MCF 10A (cell line): ENCODE measurements at regions of chr15 and their contacts with region 1.

Region 1: DNA sequence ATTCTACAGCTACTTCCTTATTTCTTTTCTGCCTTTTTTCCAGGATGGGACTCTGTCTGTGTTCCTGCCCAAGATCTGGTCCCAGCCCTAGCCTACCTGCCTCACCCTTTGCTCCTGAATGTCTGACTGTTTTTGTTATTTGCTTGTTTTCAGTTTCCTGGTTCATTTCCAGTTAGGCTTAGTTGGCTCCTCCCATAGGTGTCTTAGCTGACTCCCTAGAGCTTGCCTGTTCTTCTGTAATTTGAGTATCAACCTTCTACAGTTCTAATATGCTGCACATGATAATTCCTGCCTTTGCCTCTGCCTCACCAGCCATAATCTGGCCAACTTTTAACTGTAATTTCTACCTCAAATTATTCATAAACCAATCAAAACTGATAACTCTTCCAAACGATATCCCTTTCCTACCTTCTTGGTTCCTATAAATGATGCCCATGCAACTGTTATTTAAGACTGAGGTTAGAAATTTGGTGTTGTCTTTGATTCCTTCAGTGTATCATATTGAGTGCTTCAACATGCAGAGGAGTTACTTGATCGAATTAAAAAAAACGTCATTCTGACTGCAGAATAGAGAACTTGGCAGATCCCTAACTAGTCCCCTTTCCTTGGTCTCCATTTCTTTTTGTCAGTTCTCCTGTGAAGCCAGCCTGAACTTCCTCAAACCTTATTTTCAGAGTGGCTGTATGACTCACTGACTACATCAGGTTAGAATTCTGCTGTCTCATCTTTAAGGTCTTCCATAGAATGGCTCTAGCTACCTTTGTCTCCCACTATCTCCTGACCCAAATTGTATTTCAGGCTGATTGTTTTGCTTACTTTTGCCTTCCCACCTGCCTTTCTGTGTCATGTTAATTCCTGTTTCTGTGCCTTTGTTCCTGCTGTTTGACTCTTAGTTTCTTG is 8.4 kb downstream of the GOLM2 start:
- DNase-seq: peak; percentile 81
- H3K4me3 Mint-ChIP-seq: peak overlapping the region; percentile 32
- H3K27ac Mint-ChIP-seq: peak overlapping the region; percentile 91
- H3K4me1 Mint-ChIP-seq: peaks cover 38% of the 10 kb centered on the region
- H3K27me3 Mint-ChIP-seq: no peaks in the 10 kb centered on the region
- CTCF ChIP-seq: no peak

Region 2: DNA sequence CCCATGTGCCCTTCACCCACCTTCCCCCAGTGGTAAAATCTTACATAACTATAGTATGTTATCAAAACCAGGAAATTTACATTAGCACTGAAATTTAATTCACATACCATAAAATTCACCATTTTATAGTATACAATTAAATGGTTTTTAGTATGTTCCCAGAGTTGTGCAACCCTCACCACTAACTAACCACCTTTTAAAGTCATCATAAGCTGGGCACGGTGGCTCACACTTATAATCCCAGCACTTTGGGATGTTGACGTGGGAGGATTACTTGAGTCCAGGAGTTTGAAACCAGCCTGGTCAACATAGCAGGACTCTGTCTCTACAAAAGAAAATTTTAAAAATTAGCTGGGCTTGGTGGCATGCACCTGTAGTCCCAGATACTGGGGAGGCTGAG is 115.5 kb before region 1 on chr15:
- CTCF ChIA-PET with region 1: no interaction called
- POLR2A ChIA-PET with region 1: no interaction called
- intact Hi-C with region 1: no loop called
- DNase-seq: no peak
- H3K4me3 Mint-ChIP-seq: no peak overlapping the region
- H3K27ac Mint-ChIP-seq: no peak overlapping the region
- H3K4me1 Mint-ChIP-seq: no peaks in the 10 kb centered on the region
- H3K27me3 Mint-ChIP-seq: no peaks in the 10 kb centered on the region
- CTCF ChIP-seq: no peak

Region 3: GRCh38 chr15:44340410-44340809 is 43.5 kb after region 1 on chr15:
- CTCF ChIA-PET with region 1: no interaction called
- POLR2A ChIA-PET with region 1: interaction called, 10 read pairs
- intact Hi-C with region 1: no loop called
- DNase-seq: peak; percentile 69
- H3K4me3 Mint-ChIP-seq: peak overlapping the region; percentile 46
- H3K27ac Mint-ChIP-seq: peak overlapping the region; percentile 85
- H3K4me1 Mint-ChIP-seq: peaks cover 8% of the 10 kb centered on the region
- H3K27me3 Mint-ChIP-seq: no peaks in the 10 kb centered on the region
- CTCF ChIP-seq: no peak